Right cardiac atrium (tissue), 5 donors: ENCODE measurements at regions of chr1 and their contacts with region 1.

Region 1: GRCh38 chr1:110554871-110555801 is 36.2 kb upstream of the KCNA10 start:
- DNase-seq: peak; percentile 63 to 82 (median 78)
- ATAC-seq: peak; percentile 89 to 91
- H3K4me3 ChIP-seq: peak overlapping the region; percentile 36
- H3K27ac ChIP-seq: no peak overlapping the region
- H3K4me1 ChIP-seq: no peaks in the 10 kb centered on the region
- H3K27me3 ChIP-seq: no peaks in the 10 kb centered on the region

Region 2: GRCh38 chr1:110328274-110328673 is 226.9 kb before region 1 on chr1:
- intact Hi-C with region 1: no loop called
- DNase-seq: no peak
- ATAC-seq: no peak
- H3K4me3 ChIP-seq: no peak overlapping the region
- H3K27ac ChIP-seq: no peak overlapping the region
- H3K4me1 ChIP-seq: no peaks in the 10 kb centered on the region
- H3K27me3 ChIP-seq: no peaks in the 10 kb centered on the region

Region 3: DNA sequence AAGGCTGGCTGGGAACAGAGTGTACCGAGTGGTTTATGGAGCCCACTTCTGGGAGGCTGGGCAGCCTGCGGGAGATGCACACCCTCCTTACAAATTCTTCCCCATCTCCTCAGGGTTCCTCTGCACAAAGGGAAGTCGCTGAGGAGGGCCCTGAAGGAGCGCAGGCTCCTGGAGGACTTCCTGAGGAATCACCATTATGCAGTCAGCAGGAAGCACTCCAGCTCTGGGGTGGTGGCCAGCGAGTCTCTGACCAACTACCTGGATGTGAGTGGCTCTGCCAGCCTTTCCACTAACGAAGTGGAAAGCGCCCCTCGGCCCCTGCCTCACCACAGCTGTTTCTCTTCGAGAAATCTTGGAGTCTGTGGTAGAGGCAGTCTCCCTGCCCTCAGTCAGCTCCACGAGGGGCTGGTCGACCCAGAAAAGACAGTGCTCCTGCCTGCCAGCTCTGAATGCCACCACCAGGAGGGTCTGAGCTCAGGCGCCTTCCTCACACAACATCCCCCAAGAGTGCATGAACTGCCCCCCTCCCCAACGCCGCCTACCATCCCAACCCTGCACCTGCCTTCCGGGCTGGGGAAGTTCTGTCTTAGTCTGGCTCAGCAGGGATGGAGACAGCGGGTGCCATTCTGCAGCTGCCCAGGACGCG is 72.4 kb before region 1 on chr1:
- intact Hi-C with region 1: no loop called
- DNase-seq: no peak
- ATAC-seq: no peak
- H3K4me3 ChIP-seq: no peak overlapping the region
- H3K27ac ChIP-seq: no peak overlapping the region
- H3K4me1 ChIP-seq: peaks cover 3% of the 10 kb centered on the region
- H3K27me3 ChIP-seq: no peaks in the 10 kb centered on the region

Region 4: GRCh38 chr1:110605901-110606656 is 50.9 kb after region 1 on chr1 and contains the start of gene KCNA2:
- intact Hi-C with region 1: loop called in 3 of 4 experiments (anchors 5 to 10 kb)
- DNase-seq: peak; percentile 56 to 86 (median 81)
- ATAC-seq: peak; percentile 74 to 86
- H3K4me3 ChIP-seq: peak within 1 kb of the TSS; percentile 56
- H3K27ac ChIP-seq: no peak within 1 kb of the TSS
- H3K4me1 ChIP-seq: peaks cover 7% of the 10 kb centered on the region
- H3K27me3 ChIP-seq: no peaks in the 10 kb centered on the region
- total RNA-seq, gene KCNA2: 0.50 to 1.5 (median 1.0) TPM

Region 5: GRCh38 chr1:110612065-110612751 is 57.1 kb after region 1 on chr1:
- intact Hi-C with region 1: loop called (anchors 2 to 10 kb)
- DNase-seq: no peak
- ATAC-seq: no peak
- H3K4me3 ChIP-seq: no peak overlapping the region
- H3K27ac ChIP-seq: no peak overlapping the region
- H3K4me1 ChIP-seq: peaks cover 2% of the 10 kb centered on the region
- H3K27me3 ChIP-seq: no peaks in the 10 kb centered on the region

Region 6: GRCh38 chr1:110619412-110620249 is 64.5 kb after region 1 on chr1:
- intact Hi-C with region 1: loop called in 3 of 4 experiments (anchors 2 to 5 kb)
- DNase-seq: peak; percentile 88 to 93 (median 92)
- ATAC-seq: peak; percentile 88 to 92
- H3K4me3 ChIP-seq: no peak overlapping the region
- H3K27ac ChIP-seq: no peak overlapping the region
- H3K4me1 ChIP-seq: no peaks in the 10 kb centered on the region
- H3K27me3 ChIP-seq: no peaks in the 10 kb centered on the region

Region 7: GRCh38 chr1:110714374-110714995 is 159.3 kb after region 1 on chr1:
- intact Hi-C with region 1: no loop called
- DNase-seq: no peak
- ATAC-seq: no peak
- H3K4me3 ChIP-seq: no peak overlapping the region
- H3K27ac ChIP-seq: no peak overlapping the region
- H3K4me1 ChIP-seq: no peaks in the 10 kb centered on the region
- H3K27me3 ChIP-seq: no peaks in the 10 kb centered on the region